ENCODE measurements at regions of chr13 and their contacts with region 1.

Region 1: DNA sequence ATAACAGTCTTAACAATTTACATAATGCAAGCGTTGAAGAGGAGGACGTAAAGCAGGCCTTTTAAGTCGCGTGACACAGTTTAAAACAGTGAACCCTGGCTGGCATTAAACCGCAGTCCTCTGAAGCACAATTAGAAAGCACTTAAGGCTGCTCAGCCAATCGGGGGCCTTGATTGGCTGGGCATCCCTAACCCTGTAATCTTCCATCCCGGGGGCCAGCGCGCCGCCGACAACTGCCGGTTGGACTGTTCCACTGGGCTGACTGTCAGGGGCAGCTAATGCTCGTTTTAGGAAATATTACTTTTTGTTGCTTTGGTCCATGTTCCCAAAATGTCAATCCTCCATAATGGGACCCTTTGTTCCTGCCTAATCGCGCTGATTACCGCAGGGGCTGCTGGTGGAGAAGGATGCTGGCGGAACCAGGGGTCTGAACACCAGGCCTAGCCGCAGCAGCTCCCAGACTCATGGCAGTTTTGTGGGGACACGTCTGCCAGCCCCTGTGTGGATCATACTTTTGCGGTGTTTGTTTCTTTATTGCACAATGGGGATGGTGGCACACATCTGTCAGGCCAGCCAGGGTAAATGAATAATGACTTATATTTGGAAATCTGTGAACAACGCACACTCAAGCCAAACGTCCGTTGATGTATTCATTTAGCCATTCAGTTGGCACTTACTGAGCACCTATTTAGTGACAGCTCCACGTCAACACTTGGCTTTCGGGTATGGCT is 127.1 kb upstream of the SPACA7 start:
- DNase-seq: no peak
- H3K4me3 ChIP-seq: no peak overlapping the region
- CTCF ChIP-seq: no peak

Region 2: DNA sequence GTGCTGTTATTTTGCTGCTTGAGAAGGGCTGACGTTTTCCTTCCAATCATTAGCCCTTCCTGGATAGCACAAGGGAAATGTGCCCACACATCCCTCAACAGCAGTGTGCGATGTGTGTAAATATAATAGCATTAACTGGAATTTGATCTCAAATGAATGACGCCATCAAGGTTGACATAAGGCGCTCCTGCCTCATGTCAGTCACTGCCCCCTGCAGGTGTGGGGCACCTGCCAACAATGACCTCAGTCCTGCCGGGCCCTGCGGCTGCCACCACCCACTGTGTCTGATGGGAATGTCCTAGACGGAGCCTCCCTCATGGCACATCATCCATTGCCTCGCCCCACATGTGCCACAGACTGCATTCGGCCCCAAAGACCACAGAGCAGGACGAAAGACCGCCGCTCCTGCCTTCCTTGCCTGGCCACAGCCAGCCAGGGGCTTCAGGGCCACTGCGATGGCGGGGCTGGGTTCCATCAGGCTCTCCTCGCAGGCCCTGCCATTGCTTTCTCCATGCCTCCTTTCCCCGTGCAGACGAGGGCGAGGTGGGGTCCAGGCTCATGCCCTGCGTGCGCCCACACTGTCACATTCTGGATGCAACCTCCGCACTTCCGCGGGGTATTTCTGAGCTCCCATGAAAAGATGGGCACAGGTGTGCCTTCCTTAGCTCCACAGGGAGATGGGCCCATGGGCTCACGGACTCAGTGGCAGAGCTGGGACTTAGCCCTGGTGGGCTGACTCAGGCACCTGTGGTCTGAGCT is 35.4 kb before region 1 on chr13:
- in situ Hi-C with region 1: no loop called
- DNase-seq: no peak
- H3K4me3 ChIP-seq: no peak overlapping the region
- CTCF ChIP-seq: no peak

Region 3: GRCh38 chr13:112346173-112346898 is 97.3 kb after region 1 on chr13:
- in situ Hi-C with region 1: loop called (anchors 25 kb)
- DNase-seq: no peak
- H3K4me3 ChIP-seq: no peak overlapping the region
- CTCF ChIP-seq: no peak

Measured in astrocyte of the cerebellum (primary cell).